ENCODE measurements at regions of chr5 and their contacts with region 1.

Region 1: DNA sequence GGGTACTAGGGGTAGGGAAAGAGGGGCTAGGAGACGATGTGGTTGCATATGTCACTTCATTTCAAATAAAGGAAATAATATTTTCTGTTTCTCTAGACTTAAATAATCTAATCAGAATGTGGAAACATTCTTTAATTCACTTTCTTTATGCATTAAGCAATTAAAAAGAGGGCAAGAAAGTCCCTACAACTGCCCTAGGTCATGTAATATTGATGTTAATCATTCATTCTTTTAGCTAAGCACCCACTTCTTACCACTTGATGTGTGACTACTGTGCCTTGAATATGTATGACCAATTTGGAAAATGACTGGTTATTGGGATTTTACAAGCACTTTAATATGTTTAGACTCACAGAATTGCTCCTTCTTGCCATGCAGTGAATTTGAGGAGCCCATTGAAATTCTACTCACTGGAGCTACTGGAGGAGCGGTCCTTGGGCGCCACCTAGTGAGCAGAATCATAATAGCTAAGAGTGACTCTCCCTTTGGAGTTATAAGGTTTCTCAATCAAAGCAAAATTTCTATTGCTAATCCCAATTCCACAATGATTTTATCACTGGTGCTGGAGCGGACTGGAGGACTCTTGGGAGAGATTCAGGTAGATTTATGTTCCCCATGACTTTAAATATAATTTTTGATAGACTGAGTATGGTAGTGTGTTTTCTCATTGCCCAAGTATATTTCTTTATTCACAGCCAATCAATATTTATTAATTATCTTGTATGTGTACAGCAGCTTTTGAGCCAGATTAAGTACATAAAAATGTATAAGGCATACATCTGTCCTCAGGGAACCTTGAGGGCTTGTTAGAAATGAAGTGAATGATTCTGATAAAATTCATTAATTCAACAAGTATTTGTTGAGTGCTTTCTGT is 225.1 kb downstream of the ADGRV1 start:
- DNase-seq: peak; percentile 81
- ATAC-seq: peak; percentile 78
- H3K4me3 Mint-ChIP-seq: no peak overlapping the region
- H3K27ac Mint-ChIP-seq: no peak overlapping the region
- H3K4me1 Mint-ChIP-seq: no peaks in the 10 kb centered on the region
- H3K27me3 Mint-ChIP-seq: peaks cover 4% of the 10 kb centered on the region

Region 2: DNA sequence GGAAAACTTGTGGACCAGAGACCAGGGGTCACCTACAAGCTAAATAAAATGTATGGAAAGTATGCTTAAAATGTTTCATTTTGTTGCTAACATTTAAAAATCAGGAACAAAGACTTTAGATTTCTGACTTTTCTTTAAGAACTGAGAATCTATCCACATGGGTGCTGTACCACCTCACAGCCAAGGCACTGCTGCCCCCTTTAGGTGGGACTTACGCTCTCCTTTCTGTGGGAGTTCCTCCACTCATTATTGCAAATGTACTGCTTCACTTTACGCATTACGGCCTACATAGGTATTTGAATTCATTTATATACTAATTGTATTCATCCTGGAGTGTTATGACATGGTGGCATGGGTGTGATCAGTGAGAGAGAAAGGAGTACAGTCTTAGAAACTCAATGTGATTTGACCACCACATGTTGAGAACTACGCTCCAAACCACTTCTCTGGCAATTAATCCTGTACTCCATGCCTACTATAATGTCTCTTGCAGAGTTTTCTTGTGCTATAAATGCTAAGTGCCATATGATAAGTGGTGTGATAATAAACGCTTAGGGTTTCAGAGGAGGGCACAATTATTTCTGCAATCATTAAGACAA is 349.5 kb before region 1 on chr5:
- CTCF ChIA-PET with region 1: interaction called, 12 read pairs
- POLR2A ChIA-PET with region 1: no interaction called
- intact Hi-C with region 1: loop called in 1 of 2 experiments (anchors 1 kb)
- DNase-seq: peak; percentile 71
- ATAC-seq: peak; percentile 63
- H3K4me3 Mint-ChIP-seq: no peak overlapping the region
- H3K27ac Mint-ChIP-seq: no peak overlapping the region
- H3K4me1 Mint-ChIP-seq: no peaks in the 10 kb centered on the region
- H3K27me3 Mint-ChIP-seq: peaks cover 3% of the 10 kb centered on the region

Region 3: DNA sequence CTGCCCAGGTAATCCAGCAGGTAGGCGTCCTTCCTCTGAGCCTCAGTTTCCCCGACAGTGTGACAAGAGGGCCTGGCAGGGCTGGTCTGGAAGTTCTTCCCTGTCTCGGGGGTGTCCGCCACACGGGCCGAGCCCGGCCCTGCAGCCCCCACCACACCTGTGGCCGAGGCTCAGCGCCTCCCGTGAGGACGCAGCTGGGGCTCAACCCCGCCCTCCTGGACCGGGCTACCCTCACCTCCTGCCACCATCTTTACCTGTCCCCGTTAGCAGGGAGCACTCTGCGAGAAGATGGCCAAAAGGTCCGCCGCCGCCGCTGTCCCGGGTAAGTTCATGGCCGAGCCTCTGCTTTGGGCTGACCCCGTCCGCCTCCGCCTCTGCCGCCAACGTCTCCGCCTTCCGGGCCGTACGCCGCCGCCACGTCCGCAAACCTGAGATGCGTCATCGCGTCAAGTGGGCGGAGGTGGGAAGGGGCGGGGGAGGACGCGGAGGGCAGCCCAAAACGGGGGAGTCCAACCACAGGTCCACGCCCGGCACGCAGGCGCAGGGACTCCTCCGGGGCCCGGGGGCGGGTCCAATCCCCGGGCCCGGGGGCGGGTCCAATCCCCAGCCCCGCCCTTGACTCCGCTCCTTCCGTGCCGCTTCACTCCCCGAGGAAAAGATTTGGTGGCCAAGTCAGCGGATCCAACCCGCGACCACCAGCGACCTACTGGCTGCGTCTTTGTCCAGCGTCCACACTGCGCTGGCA is 254.3 kb before region 1 on chr5 and contains the start of gene LYSMD3:
- CTCF ChIA-PET with region 1: no interaction called
- POLR2A ChIA-PET with region 1: no interaction called
- intact Hi-C with region 1: loop called in 1 of 2 experiments (anchors 5 kb)
- DNase-seq: peak; percentile 97
- ATAC-seq: peak; percentile 94
- H3K4me3 Mint-ChIP-seq: peak within 1 kb of the TSS; percentile 85
- H3K27ac Mint-ChIP-seq: peak within 1 kb of the TSS; percentile 95
- H3K4me1 Mint-ChIP-seq: peaks cover 27% of the 10 kb centered on the region
- H3K27me3 Mint-ChIP-seq: peaks cover 7% of the 10 kb centered on the region
- total RNA-seq, gene LYSMD3: 11.6 to 12.5 TPM

Region 4: GRCh38 chr5:90709323-90710155 is 74.2 kb before region 1 on chr5:
- CTCF ChIA-PET with region 1: interaction called, 12 read pairs
- POLR2A ChIA-PET with region 1: no interaction called
- intact Hi-C with region 1: loop called in 1 of 2 experiments (anchors 1 kb)
- DNase-seq: peak; percentile 22
- ATAC-seq: no peak
- H3K4me3 Mint-ChIP-seq: no peak overlapping the region
- H3K27ac Mint-ChIP-seq: no peak overlapping the region
- H3K4me1 Mint-ChIP-seq: no peaks in the 10 kb centered on the region
- H3K27me3 Mint-ChIP-seq: peaks cover 11% of the 10 kb centered on the region

Region 5: DNA sequence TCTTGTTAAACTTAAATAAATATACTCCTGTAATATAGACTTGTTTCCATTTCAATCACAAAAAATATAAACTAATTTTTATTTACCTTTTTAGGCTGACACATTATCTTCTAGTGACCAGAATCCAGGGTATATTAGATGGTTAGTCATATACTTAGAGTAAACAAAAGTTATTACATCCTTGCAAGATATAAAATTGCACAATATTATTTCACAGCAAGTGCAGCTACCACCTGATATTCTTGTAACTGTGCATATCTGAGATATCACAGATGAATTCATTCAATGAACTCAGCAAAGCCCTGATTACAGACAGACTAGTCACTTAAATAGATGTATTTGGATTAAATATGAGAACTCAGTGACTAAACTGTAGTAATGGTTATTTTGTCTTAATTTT is 625.0 kb after region 1 on chr5:
- CTCF ChIA-PET with region 1: no interaction called
- POLR2A ChIA-PET with region 1: no interaction called
- intact Hi-C with region 1: no loop called
- DNase-seq: no peak
- ATAC-seq: no peak
- H3K4me3 Mint-ChIP-seq: no peak overlapping the region
- H3K27ac Mint-ChIP-seq: no peak overlapping the region
- H3K4me1 Mint-ChIP-seq: no peaks in the 10 kb centered on the region
- H3K27me3 Mint-ChIP-seq: no peaks in the 10 kb centered on the region

Measured in activated CD4-positive, alpha-beta T cell treated with anti-CD3 and anti-CD28 coated beads for 36 hours (primary cell).